ENCODE measurements at regions of chr16 and their contacts with region 1.

Region 1: GRCh38 chr16:30761928-30762810 is at the starts of genes CFAP119 and RNF40:
- DNase-seq: peak; percentile 84 to 95
- ATAC-seq: peak; percentile 94 to 97 (median 95)
- H3K4me3 ChIP-seq: peak within 1 kb of the TSS; percentile 80
- H3K4me3 Mint-ChIP-seq: peak within 1 kb of the TSS; percentile 95
- H3K27ac ChIP-seq: peak within 1 kb of the TSS; percentile 77
- H3K27ac Mint-ChIP-seq: peak within 1 kb of the TSS; percentile 92
- H3K4me1 ChIP-seq: peaks cover 57% of the 10 kb centered on the region
- H3K4me1 Mint-ChIP-seq: peaks cover 35 to 55% of the 10 kb centered on the region in 2 donors
- H3K27me3 ChIP-seq: no peaks in the 10 kb centered on the region
- H3K27me3 Mint-ChIP-seq: no peaks in the 10 kb centered on the region
- CTCF ChIP-seq: no peak
- total RNA-seq, gene CFAP119: 3.4 to 5.1 (median 4.9) TPM
- total RNA-seq, gene RNF40: 153 to 167 (median 161) TPM

Region 2: DNA sequence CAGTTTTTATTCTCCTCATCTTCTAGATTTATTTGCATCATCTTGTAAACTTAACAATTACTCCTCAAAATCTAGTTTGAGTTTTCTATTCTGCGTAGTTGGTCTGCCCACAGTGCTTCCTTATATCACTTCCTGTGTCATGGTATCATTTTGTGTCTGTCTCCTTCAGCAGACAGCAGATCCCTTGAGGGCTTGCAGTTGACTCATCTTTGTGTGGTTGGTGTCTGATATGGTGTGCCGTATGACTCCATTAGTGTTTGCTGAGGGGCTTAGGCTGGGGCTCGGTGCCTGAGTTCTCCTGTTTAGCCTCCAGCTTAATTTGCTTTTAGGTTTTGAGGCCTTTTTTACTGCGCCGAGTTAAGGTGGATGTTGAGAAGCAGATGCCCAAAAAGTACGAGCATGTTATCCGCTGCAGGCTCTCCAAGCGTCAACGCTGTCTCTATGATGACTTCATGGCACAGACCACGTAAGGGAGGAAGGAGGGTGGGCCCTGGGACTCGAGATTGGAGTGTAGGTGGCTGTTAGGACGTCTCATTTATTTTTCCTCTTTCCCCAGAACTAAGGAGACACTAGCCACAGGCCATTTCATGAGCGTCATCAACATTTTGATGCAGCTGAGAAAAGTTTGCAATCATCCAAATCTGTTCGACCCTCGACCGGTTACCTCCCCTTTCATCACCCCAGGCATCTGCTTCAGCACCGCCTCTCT is 46.3 kb before region 1 on chr16:
- intact Hi-C with region 1: loop called (anchors 10 kb)
- DNase-seq: peak; percentile 44 to 74
- ATAC-seq: peak; percentile 94 to 99 (median 98)
- H3K4me3 ChIP-seq: no peak overlapping the region
- H3K4me3 Mint-ChIP-seq: peak overlapping the region; percentile 79
- H3K27ac ChIP-seq: peak overlapping the region; percentile 70
- H3K27ac Mint-ChIP-seq: peak overlapping the region; percentile 97 to 98
- H3K4me1 ChIP-seq: peaks cover 14% of the 10 kb centered on the region
- H3K4me1 Mint-ChIP-seq: peaks cover 27 to 41% of the 10 kb centered on the region in 2 donors
- H3K27me3 ChIP-seq: no peaks in the 10 kb centered on the region
- H3K27me3 Mint-ChIP-seq: no peaks in the 10 kb centered on the region
- CTCF ChIP-seq: no peak

Region 3: GRCh38 chr16:30813821-30814189 is 51.6 kb after region 1 on chr16:
- intact Hi-C with region 1: loop called (anchors 1 kb)
- DNase-seq: no peak
- ATAC-seq: peak in 2 of 3 donors; percentile 1 to 5
- H3K4me3 ChIP-seq: peak overlapping the region; percentile 48
- H3K4me3 Mint-ChIP-seq: peak overlapping the region; percentile 89
- H3K27ac ChIP-seq: peak overlapping the region; percentile 83
- H3K27ac Mint-ChIP-seq: peak overlapping the region; percentile 85 to 88
- H3K4me1 ChIP-seq: peaks cover 14% of the 10 kb centered on the region
- H3K4me1 Mint-ChIP-seq: peaks cover 15 to 16% of the 10 kb centered on the region in 2 donors
- H3K27me3 ChIP-seq: no peaks in the 10 kb centered on the region
- H3K27me3 Mint-ChIP-seq: peaks cover 0 to 3% of the 10 kb centered on the region in 2 donors
- CTCF ChIP-seq: no peak